Prostate gland (tissue), 2 donors: ENCODE measurements at regions of chr20 and their contacts with region 1.

Region 1: DNA sequence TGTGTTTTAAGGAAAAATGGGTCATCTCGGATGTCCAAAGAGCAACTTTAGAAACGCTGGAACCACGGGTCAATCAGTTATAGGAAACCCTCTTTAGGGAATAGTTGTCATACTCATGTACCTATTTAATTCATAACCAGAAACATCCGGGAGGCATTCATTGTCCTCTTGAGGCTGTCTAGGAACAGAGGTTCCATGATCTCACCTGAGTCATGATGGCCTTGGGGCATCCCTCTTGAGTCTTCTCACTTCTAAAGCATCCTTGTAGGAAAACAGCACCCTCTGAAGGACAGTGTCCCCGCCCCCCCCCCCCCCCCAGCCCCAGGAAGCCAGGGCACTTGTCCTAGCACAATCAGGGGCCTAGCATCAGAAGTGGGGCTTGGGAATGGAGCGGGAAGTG is 46.3 kb upstream of the CDH4 start:
- DNase-seq: no peak
- H3K4me3 ChIP-seq: no peak overlapping the region
- H3K27ac ChIP-seq: no peak overlapping the region
- H3K4me1 ChIP-seq: no peaks in the 10 kb centered on the region
- H3K27me3 ChIP-seq: no peaks in the 10 kb centered on the region
- CTCF ChIP-seq: no peak
- POLR2A ChIP-seq: no peak

Region 2: DNA sequence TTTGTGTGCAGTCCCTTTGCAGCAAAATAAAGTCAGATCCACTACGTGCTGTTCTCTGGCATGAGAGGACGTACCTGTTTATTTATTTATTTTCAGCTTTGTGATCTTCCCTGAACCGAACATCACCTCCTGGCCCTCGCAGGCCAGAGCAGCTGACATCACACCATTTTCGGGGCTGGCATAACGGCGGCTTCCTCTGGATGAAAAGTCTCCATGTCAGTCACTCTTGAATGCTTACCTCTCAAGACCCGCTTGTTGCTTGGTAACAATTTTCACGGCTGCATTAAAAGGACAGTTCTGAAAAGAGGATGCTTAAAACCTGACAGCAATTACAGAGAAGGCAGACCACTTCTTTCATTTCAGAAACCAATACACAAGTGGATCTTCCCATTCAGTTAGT is 113.5 kb before region 1 on chr20:
- intact Hi-C with region 1: loop called (anchors 5 kb)
- DNase-seq: no peak
- H3K4me3 ChIP-seq: no peak overlapping the region
- H3K27ac ChIP-seq: no peak overlapping the region
- H3K4me1 ChIP-seq: no peaks in the 10 kb centered on the region
- H3K27me3 ChIP-seq: no peaks in the 10 kb centered on the region
- CTCF ChIP-seq: no peak
- POLR2A ChIP-seq: no peak

Region 3: GRCh38 chr20:61460261-61461052 is 254.7 kb after region 1 on chr20:
- intact Hi-C with region 1: no loop called
- DNase-seq: no peak
- H3K4me3 ChIP-seq: no peak overlapping the region
- H3K27ac ChIP-seq: no peak overlapping the region
- H3K4me1 ChIP-seq: no peaks in the 10 kb centered on the region
- H3K27me3 ChIP-seq: no peaks in the 10 kb centered on the region
- CTCF ChIP-seq: no peak
- POLR2A ChIP-seq: no peak